WTC11 (cell line): ENCODE measurements at regions of chr15 and their contacts with region 1.

Region 1: DNA sequence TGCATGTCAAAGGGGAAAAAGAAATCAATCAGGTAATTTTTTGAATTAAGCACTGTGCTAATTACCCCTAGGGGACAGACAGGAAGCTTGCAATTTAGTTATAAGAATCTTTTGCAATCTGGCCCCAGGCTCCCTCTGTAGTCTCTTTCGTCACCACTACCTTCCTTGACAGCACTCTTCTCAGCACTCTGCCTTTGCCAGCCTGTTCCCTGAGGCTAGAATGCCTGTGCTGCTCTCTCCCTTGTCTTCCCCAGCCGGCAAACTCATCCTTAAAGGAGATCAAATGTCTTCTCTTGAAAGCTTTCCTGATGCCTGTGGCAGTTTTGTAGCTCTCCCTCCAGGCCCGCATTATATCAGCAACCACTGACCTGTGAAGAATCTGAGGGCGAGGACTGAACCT is 32.4 kb upstream of the PRTG start:
- DNase-seq: no peak
- ATAC-seq: peak; percentile 77
- H3K4me3 Mint-ChIP-seq: no peak overlapping the region
- H3K27ac Mint-ChIP-seq: peak overlapping the region; percentile 66; the same call in 1 of the 2 replicates
- H3K4me1 Mint-ChIP-seq: peaks cover 13% of the 10 kb centered on the region
- H3K27me3 Mint-ChIP-seq: peaks cover 20% of the 10 kb centered on the region
- CTCF ChIP-seq: no peak

Region 2: GRCh38 chr15:55420171-55420866 is 355.0 kb before region 1 on chr15:
- CTCF ChIA-PET with region 1: no interaction called
- POLR2A ChIA-PET with region 1: no interaction called
- DNase-seq: no peak
- ATAC-seq: no peak
- H3K4me3 Mint-ChIP-seq: no peak overlapping the region
- H3K27ac Mint-ChIP-seq: no peak overlapping the region
- H3K4me1 Mint-ChIP-seq: peaks cover 23% of the 10 kb centered on the region
- H3K27me3 Mint-ChIP-seq: no peaks in the 10 kb centered on the region
- CTCF ChIP-seq: no peak

Region 3: GRCh38 chr15:55649054-55649423 is 126.3 kb before region 1 on chr15:
- CTCF ChIA-PET with region 1: interaction called, 19 read pairs
- POLR2A ChIA-PET with region 1: no interaction called
- DNase-seq: no peak
- ATAC-seq: no peak
- H3K4me3 Mint-ChIP-seq: no peak overlapping the region
- H3K27ac Mint-ChIP-seq: no peak overlapping the region
- H3K4me1 Mint-ChIP-seq: peaks cover 22% of the 10 kb centered on the region
- H3K27me3 Mint-ChIP-seq: peaks cover 6% of the 10 kb centered on the region
- CTCF ChIP-seq: no peak

Region 4: DNA sequence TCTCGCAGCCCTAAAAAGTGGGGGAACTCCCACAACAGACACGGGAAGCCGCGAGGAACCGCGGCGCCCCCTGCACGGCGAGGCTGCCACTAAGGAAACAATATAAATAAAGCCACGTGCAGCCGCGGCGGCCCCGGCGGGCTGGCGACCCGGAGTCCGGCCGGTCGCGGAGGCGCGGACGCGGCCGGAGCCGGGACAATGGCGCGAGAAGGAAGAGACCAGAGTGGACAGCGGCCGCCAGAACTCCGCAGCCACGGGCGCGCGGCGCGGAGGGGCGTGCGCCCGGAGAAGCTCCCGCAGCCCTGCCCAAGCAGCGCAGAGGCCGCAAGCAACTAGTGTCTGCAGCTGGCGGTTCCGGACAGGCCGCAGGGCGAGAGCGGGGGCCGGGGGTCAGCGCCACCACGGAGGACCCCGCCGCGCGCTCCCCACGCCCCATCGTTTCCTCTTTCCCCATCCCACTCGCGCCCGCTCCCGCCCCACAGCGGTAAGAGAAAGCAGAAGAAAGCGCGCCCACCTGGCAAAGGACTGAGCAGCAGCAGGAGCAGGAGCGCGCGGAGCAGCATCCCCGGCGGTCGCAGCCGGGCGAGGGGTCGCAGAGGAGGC is 32.9 kb before region 1 on chr15:
- CTCF ChIA-PET with region 1: interaction called, 11 read pairs
- POLR2A ChIA-PET with region 1: no interaction called
- DNase-seq: no peak
- ATAC-seq: peak; percentile 10
- H3K4me3 Mint-ChIP-seq: peak overlapping the region; percentile 70
- H3K27ac Mint-ChIP-seq: no peak overlapping the region
- H3K4me1 Mint-ChIP-seq: peaks cover 4% of the 10 kb centered on the region
- H3K27me3 Mint-ChIP-seq: peaks cover 48% of the 10 kb centered on the region
- CTCF ChIP-seq: no peak

Region 5: GRCh38 chr15:55758580-55758986 is 16.7 kb before region 1 on chr15:
- CTCF ChIA-PET with region 1: interaction called, 29 read pairs
- POLR2A ChIA-PET with region 1: no interaction called
- DNase-seq: no peak
- ATAC-seq: no peak; the same call in 1 of the 2 replicates
- H3K4me3 Mint-ChIP-seq: no peak overlapping the region
- H3K27ac Mint-ChIP-seq: no peak overlapping the region
- H3K4me1 Mint-ChIP-seq: peaks cover 8% of the 10 kb centered on the region
- H3K27me3 Mint-ChIP-seq: no peaks in the 10 kb centered on the region
- CTCF ChIP-seq: no peak

Region 6: GRCh38 chr15:55764398-55764797 is 10.9 kb before region 1 on chr15:
- CTCF ChIA-PET with region 1: interaction called, 29 read pairs
- POLR2A ChIA-PET with region 1: interaction called, 7 read pairs
- DNase-seq: no peak
- ATAC-seq: peak; percentile 66
- H3K4me3 Mint-ChIP-seq: no peak overlapping the region
- H3K27ac Mint-ChIP-seq: no peak overlapping the region
- H3K4me1 Mint-ChIP-seq: no peaks in the 10 kb centered on the region; the same call in 1 of the 2 replicates
- H3K27me3 Mint-ChIP-seq: no peaks in the 10 kb centered on the region
- CTCF ChIP-seq: no peak

Region 7: GRCh38 chr15:55789066-55789660 is 13.8 kb after region 1 on chr15:
- CTCF ChIA-PET with region 1: interaction called, 22 read pairs
- POLR2A ChIA-PET with region 1: no interaction called
- DNase-seq: peak; percentile 81
- ATAC-seq: peak; percentile 71
- H3K4me3 Mint-ChIP-seq: no peak overlapping the region
- H3K27ac Mint-ChIP-seq: no peak overlapping the region
- H3K4me1 Mint-ChIP-seq: peaks cover 20% of the 10 kb centered on the region
- H3K27me3 Mint-ChIP-seq: peaks cover 3% of the 10 kb centered on the region
- CTCF ChIP-seq: peak; percentile 91

Region 8: GRCh38 chr15:55799291-55800212 is 24.2 kb after region 1 on chr15:
- CTCF ChIA-PET with region 1: interaction called, 12 read pairs
- POLR2A ChIA-PET with region 1: no interaction called
- DNase-seq: peak; percentile 79
- ATAC-seq: peak; percentile 85
- H3K4me3 Mint-ChIP-seq: peak overlapping the region; percentile 16
- H3K27ac Mint-ChIP-seq: peak overlapping the region; percentile 74; the same call in 1 of the 2 replicates
- H3K4me1 Mint-ChIP-seq: peaks cover 18% of the 10 kb centered on the region
- H3K27me3 Mint-ChIP-seq: no peaks in the 10 kb centered on the region; the same call in 1 of the 2 replicates
- CTCF ChIP-seq: peak; percentile 51; the same call in 1 of the 2 replicates